Astrocyte of the cerebellum (primary cell): ENCODE measurements at regions of chr10 and their contacts with region 1.

Region 1: GRCh38 chr10:114876602-114877300 is 55.2 kb downstream of the FHIP2A start:
- DNase-seq: no peak
- H3K4me3 ChIP-seq: no peak overlapping the region
- CTCF ChIP-seq: peak; percentile 85

Region 2: GRCh38 chr10:115118346-115118745 is 241.6 kb after region 1 on chr10:
- in situ Hi-C with region 1: loop called (anchors 25 kb)
- DNase-seq: no peak
- H3K4me3 ChIP-seq: no peak overlapping the region
- CTCF ChIP-seq: no peak